Calu3 (cell line): ENCODE measurements at regions of chr6 and their contacts with region 1.

Region 1: GRCh38 chr6:80605165-80605989 is 498.9 kb downstream of the BCKDHB start:
- DNase-seq: peak; percentile 46
- H3K4me3 Mint-ChIP-seq: no peak overlapping the region
- H3K27ac Mint-ChIP-seq: peak overlapping the region; percentile 27
- H3K4me1 Mint-ChIP-seq: peaks cover 29% of the 10 kb centered on the region
- H3K27me3 Mint-ChIP-seq: no peaks in the 10 kb centered on the region
- CTCF ChIP-seq: peak; percentile 62

Region 2: DNA sequence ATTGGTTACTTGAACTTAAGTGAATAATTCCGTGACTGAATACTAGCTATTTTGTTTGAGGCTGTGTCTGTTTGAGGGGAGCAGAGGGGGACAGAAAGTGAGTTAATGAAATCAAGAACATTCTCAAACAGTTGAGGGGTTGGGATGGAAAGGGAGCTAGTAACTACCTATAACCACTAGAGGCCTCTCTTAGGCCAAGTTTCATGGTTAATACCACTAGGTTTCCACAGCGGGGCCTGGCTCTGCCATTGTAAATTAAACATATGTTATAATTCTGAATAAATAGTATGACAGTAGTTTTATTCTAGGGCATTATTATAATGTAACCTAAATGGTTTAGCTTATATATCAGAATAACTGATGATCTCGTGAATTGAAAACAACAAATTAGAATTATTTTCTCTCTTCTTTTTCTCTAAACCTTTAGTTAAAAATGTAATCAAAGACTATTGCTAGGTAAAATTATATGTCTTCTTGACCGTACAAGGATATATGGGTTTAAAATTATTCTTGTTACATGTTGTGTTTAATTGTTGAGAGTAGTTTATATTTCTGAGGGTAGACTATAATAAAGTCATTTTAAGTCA is 390.8 kb before region 1 on chr6:
- CTCF ChIA-PET with region 1: no interaction called
- intact Hi-C with region 1: loop called (anchors 5 kb)
- DNase-seq: peak; percentile 39
- H3K4me3 Mint-ChIP-seq: no peak overlapping the region
- H3K27ac Mint-ChIP-seq: no peak overlapping the region
- H3K4me1 Mint-ChIP-seq: peaks cover 22% of the 10 kb centered on the region
- H3K27me3 Mint-ChIP-seq: no peaks in the 10 kb centered on the region
- CTCF ChIP-seq: peak; percentile 56

Region 3: GRCh38 chr6:80622641-80623040 is 17.3 kb after region 1 on chr6:
- CTCF ChIA-PET with region 1: no interaction called
- intact Hi-C with region 1: no loop called
- DNase-seq: peak; percentile 66
- H3K4me3 Mint-ChIP-seq: no peak overlapping the region
- H3K27ac Mint-ChIP-seq: peak overlapping the region; percentile 34
- H3K4me1 Mint-ChIP-seq: peaks cover 48% of the 10 kb centered on the region
- H3K27me3 Mint-ChIP-seq: no peaks in the 10 kb centered on the region
- CTCF ChIP-seq: no peak

Region 4: GRCh38 chr6:80903711-80904110 is 298.3 kb after region 1 on chr6:
- CTCF ChIA-PET with region 1: no interaction called
- intact Hi-C with region 1: loop called (anchors 10 kb)
- DNase-seq: no peak
- H3K4me3 Mint-ChIP-seq: no peak overlapping the region
- H3K27ac Mint-ChIP-seq: no peak overlapping the region
- H3K4me1 Mint-ChIP-seq: no peaks in the 10 kb centered on the region
- H3K27me3 Mint-ChIP-seq: no peaks in the 10 kb centered on the region
- CTCF ChIP-seq: no peak

Region 5: DNA sequence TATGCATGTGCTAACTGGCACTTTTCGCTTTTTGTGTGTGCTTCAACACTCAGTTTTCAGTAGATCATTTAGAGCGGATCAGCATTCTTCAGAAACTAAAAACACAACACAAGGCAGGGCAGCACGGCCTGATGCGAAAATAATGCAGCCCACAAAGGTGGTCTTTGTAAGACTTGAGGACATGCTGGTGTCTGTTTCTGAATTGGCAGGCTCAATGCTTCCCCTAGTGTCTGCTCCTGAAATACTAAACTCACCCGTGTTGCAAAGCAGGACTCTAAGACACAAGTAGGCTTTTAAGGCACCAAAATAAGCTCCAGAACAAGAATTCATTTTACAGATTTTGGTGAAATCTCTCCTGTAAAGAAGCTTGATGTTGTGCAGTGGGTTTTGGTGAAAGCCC is 470.6 kb after region 1 on chr6:
- CTCF ChIA-PET with region 1: no interaction called
- intact Hi-C with region 1: loop called (anchors 10 kb)
- DNase-seq: no peak
- H3K4me3 Mint-ChIP-seq: no peak overlapping the region
- H3K27ac Mint-ChIP-seq: no peak overlapping the region
- H3K4me1 Mint-ChIP-seq: no peaks in the 10 kb centered on the region
- H3K27me3 Mint-ChIP-seq: no peaks in the 10 kb centered on the region
- CTCF ChIP-seq: peak; percentile 30

Region 6: DNA sequence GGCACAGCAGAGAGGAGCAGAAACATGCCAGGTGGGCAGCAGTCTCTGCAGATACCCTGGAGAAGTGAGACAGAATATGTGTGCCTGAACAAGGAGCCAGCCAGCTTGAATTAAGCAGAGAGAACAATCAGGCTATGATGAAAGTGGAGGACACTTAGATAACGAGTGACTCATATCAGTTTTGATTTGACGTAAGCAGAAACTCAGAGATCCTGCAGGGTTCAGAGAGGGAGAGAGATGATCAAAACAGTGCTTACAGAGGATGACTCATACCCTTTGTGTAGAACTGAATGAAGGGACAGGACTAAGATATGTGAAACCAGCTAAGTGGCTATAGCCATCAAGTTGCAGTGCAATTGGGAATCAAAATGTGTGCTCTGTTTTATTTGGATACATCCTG is 846.4 kb after region 1 on chr6:
- CTCF ChIA-PET with region 1: no interaction called
- intact Hi-C with region 1: loop called (anchors 10 kb)
- DNase-seq: peak; percentile 16
- H3K4me3 Mint-ChIP-seq: no peak overlapping the region
- H3K27ac Mint-ChIP-seq: no peak overlapping the region
- H3K4me1 Mint-ChIP-seq: peaks cover 7% of the 10 kb centered on the region
- H3K27me3 Mint-ChIP-seq: no peaks in the 10 kb centered on the region
- CTCF ChIP-seq: no peak